Activated CD8-positive, alpha-beta memory T cell treated with anti-CD3 and anti-CD28 coated beads, Interleukin-2, amount 10 ng/mL, durations not matched to agents 7 days and 5 days (primary cell): ENCODE measurements at regions of chr19 and their contacts with region 1.

Region 1: DNA sequence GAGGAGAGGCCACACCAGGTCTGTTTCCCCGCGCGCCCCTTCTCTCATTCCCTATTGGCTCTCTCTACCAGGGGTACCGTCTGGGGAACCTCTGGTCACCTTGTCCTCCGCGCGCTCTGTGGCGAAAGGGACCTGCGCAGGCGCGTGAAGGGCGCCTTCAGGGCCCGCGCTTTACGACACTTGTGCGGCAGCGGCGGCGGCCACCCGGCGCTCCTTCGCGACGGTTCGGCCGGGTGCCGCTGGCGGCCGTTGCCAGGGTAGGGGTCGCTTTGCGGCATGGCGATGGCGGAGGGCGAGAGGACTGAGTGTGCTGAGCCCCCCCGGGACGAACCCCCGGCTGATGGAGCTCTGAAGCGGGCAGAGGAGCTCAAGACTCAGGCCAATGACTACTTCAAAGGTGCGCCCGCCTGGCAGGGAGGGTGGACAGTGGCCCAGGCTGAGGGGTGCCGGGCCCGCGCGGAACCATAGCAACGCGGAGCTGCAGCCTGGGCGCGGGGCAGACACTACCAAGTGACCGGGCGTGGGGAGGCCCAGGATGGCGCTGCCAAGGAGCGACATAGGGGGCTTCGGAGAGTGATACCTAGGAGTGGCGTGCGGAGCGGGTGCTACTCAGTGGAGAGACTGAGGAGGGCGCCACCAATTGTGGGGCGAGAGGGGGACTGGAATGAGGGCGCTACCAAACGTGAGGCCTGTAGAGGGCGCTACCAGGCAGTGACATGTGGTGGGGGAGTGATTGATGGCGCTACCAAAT is at the start of gene PPP5C:
- DNase-seq: peak; percentile 93
- ATAC-seq: peak; percentile 75
- H3K4me3 Mint-ChIP-seq: peak within 1 kb of the TSS; percentile 93
- H3K27ac Mint-ChIP-seq: peak within 1 kb of the TSS; percentile 91
- H3K4me1 Mint-ChIP-seq: peaks cover 52% of the 10 kb centered on the region
- H3K27me3 Mint-ChIP-seq: peaks cover 9% of the 10 kb centered on the region
- total RNA-seq, gene PPP5C: 99.2 to 110 TPM

Region 2: GRCh38 chr19:46361915-46362314 is 14.9 kb after region 1 on chr19:
- CTCF ChIA-PET with region 1: interaction called, 35 read pairs
- DNase-seq: no peak
- ATAC-seq: peak; percentile 69
- H3K4me3 Mint-ChIP-seq: peak overlapping the region; percentile 68
- H3K27ac Mint-ChIP-seq: peak overlapping the region; percentile 78
- H3K4me1 Mint-ChIP-seq: peaks cover 34% of the 10 kb centered on the region
- H3K27me3 Mint-ChIP-seq: no peaks in the 10 kb centered on the region

Region 3: GRCh38 chr19:46372901-46373420 is 26.0 kb after region 1 on chr19:
- CTCF ChIA-PET with region 1: interaction called, 11 read pairs
- DNase-seq: no peak
- ATAC-seq: no peak
- H3K4me3 Mint-ChIP-seq: no peak overlapping the region
- H3K27ac Mint-ChIP-seq: no peak overlapping the region
- H3K4me1 Mint-ChIP-seq: peaks cover 22% of the 10 kb centered on the region
- H3K27me3 Mint-ChIP-seq: no peaks in the 10 kb centered on the region